BJ (cell line): ENCODE measurements at regions of chr17 and their contacts with region 1.

Region 1: DNA sequence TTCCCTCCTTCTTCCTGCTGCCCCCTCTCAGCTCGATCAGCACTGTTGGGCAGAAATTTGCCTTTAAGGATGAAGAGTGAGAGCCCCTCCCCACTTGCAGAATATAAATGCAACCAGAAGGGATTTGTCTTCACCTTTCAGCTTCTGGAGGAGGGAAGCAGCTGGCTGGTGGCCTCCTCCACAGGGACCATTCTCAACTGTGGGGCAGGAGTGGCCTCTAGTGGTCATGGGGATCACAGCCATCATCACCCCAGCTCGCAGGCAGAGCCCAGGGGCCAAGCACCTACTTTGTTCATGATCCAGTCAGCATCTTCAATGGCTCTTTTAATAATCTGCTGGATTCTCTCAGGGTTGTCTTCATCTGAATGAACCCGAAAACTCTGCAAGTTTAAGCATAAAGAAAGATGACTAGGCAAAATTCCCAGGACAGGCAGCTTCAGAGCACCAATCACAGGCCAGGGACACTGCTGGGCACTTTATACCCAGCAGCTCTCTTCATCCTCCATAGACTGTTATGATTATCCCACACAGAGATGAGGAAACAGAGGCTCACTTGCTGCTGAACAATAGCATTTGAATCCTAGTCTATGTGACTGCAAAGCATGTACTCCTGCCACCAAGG is 13.1 kb downstream of the LYRM9 start:
- DNase-seq: no peak
- H3K4me3 ChIP-seq: no peak overlapping the region
- H3K27me3 ChIP-seq: no peaks in the 10 kb centered on the region
- CTCF ChIP-seq: peak; percentile 90

Region 2: GRCh38 chr17:27760069-27760885 is 119.8 kb before region 1 on chr17:
- CTCF ChIA-PET with region 1: interaction called, 147 read pairs
- POLR2A ChIA-PET with region 1: no interaction called
- DNase-seq: no peak
- H3K4me3 ChIP-seq: no peak overlapping the region
- H3K27me3 ChIP-seq: no peaks in the 10 kb centered on the region; the same call in 1 of the 2 replicates
- CTCF ChIP-seq: peak; percentile 82

Region 3: GRCh38 chr17:27805520-27806146 is 74.5 kb before region 1 on chr17:
- CTCF ChIA-PET with region 1: interaction called, 197 read pairs
- POLR2A ChIA-PET with region 1: no interaction called
- DNase-seq: peak; percentile 21
- H3K4me3 ChIP-seq: 0 out of 2 replicates have a peak overlapping the region, but pooled peaks have one; percentile 10
- H3K27me3 ChIP-seq: no peaks in the 10 kb centered on the region
- CTCF ChIP-seq: peak; percentile 84

Region 4: GRCh38 chr17:27856676-27857432 is 23.2 kb before region 1 on chr17:
- CTCF ChIA-PET with region 1: interaction called, 17 read pairs
- POLR2A ChIA-PET with region 1: no interaction called
- DNase-seq: no peak
- H3K4me3 ChIP-seq: no peak overlapping the region
- H3K27me3 ChIP-seq: peaks cover 5% of the 10 kb centered on the region; the same call in 1 of the 2 replicates
- CTCF ChIP-seq: no peak